ENCODE measurements at regions of chr4 and their contacts with region 1.

Region 1: GRCh38 chr4:178329226-178329872 is 887.1 kb upstream of the AGA start:
- DNase-seq: no peak
- ATAC-seq: no peak
- H3K4me3 ChIP-seq: no peak overlapping the region
- H3K4me3 Mint-ChIP-seq: no peak overlapping the region
- H3K27ac ChIP-seq: no peak overlapping the region
- H3K27ac Mint-ChIP-seq: no peak overlapping the region
- H3K4me1 ChIP-seq: no peaks in the 10 kb centered on the region
- H3K4me1 Mint-ChIP-seq: no peaks in the 10 kb centered on the region
- H3K27me3 ChIP-seq: no peaks in the 10 kb centered on the region
- H3K27me3 Mint-ChIP-seq: no peaks in the 10 kb centered on the region
- CTCF ChIP-seq: no peak

Region 2: GRCh38 chr4:178314287-178314686 is 15.1 kb before region 1 on chr4:
- CTCF ChIA-PET with region 1: no interaction called
- POLR2A ChIA-PET with region 1: no interaction called
- intact Hi-C with region 1: loop called in 1 of 2 experiments (anchors 2 kb)
- DNase-seq: no peak
- ATAC-seq: no peak
- H3K4me3 ChIP-seq: no peak overlapping the region
- H3K4me3 Mint-ChIP-seq: no peak overlapping the region
- H3K27ac ChIP-seq: no peak overlapping the region
- H3K27ac Mint-ChIP-seq: no peak overlapping the region
- H3K4me1 ChIP-seq: no peaks in the 10 kb centered on the region
- H3K4me1 Mint-ChIP-seq: no peaks in the 10 kb centered on the region
- H3K27me3 ChIP-seq: no peaks in the 10 kb centered on the region
- H3K27me3 Mint-ChIP-seq: no peaks in the 10 kb centered on the region
- CTCF ChIP-seq: no peak